Activated B cell treated with CpG ODN at 0.5 μM for 24 hours (primary cell): ENCODE measurements at regions of chr1 and their contacts with region 1.

Region 1: DNA sequence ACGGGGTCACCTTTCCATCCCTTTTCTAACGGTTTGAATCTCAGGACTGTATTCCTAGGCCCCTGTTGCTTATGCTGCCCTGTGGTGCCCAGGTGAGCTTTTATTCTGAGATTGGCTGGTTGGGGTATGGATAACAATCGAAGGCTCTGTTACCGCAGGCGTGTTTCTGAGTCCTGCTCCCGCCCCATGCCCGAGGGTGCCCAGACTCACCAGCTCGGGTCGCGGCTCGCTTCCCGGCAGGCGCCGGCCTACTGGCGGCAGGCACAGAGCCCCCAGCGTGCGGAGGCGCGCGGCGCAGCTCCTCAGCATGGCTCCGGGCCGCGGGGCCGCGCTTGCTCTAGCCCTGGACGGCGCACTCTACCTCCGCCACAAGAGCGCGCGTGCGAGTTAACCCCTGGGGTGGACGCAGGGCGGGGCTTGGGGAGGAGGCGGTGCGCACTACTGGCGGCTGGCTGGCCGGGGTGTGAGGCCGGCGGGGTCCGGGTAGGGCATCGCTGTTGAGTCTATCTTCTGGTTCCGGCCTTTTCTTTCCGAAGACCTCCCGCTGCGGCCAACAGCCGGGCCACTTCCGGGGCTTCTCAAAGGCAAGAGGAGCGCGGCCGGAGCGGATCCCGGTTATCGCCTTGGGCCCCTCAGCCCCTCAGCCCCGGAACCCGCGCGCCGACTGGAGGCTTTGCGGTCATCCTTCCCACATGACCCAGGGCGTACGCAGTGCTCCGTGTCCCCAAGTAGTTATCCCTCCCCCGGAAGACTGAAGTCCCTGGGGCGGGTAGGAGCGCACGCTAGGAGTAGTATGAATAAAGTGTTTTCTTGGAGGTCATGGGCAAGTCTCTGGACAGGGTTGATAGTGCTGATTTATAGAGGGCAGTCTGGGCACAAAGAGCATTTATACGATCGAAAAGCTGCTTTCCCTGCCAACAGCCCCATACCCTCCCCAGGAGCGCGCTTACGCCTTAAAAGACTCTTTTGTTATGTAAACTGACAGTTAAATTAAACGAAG is at the start of gene THEM4:
- DNase-seq: peak; percentile 93
- ATAC-seq: peak; percentile 99
- H3K4me3 Mint-ChIP-seq: peak within 1 kb of the TSS; percentile 90
- H3K27ac Mint-ChIP-seq: peak within 1 kb of the TSS; percentile 92
- H3K4me1 Mint-ChIP-seq: peaks cover 16% of the 10 kb centered on the region
- H3K27me3 Mint-ChIP-seq: no peaks in the 10 kb centered on the region
- CTCF ChIP-seq: no peak
- total RNA-seq, gene THEM4: 20.4 and 22.8 TPM in 2 replicates

Region 2: DNA sequence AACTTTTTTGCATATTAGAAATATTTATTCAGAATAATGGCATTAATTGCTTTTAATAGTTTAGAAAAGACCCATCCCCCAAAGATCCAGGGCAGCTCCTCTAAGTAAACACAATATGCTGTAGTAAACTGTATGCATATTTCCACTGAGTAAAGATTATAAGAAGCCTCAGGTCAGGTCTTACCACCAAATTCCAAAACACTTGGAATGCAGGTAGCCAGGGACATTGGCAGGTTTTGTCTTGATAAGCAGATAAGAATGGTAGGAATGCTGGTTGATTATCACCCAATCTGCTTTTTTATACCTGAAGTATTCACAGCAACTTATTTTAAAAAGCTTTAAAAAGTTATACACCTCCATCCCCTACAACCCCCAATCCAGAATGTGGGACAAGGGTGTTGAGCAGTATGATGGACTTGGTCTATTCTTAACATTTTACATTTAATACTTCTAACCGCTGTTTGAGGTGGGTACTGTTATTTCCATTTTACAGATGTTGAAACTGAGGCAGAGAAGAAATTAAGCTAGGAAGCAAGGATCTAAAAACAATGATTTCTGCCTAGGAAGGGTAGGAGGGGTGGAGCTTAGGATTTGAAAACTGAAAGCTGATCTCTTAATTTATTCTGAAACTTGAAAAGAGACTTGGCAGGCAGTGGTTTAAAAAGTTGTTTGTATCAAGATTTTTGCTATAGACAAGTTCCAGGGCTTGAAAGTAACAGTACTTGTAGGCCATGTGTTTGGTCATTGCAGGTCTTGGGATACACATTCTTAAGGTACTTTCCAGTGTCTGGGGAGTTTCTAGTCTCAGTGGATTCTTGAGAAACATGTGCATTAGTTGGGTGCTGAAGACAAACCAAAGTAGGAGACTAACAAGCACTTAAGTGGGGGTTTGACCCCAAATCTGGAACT is 15.5 kb after region 1 on chr1:
- CTCF ChIA-PET with region 1: interaction called, 7 read pairs
- POLR2A ChIA-PET with region 1: interaction called, 109 read pairs
- intact Hi-C with region 1: loop called (anchors 1 kb)
- DNase-seq: no peak
- ATAC-seq: no peak
- H3K4me3 Mint-ChIP-seq: no peak overlapping the region
- H3K27ac Mint-ChIP-seq: peak overlapping the region; percentile 8
- H3K4me1 Mint-ChIP-seq: peaks cover 36% of the 10 kb centered on the region
- H3K27me3 Mint-ChIP-seq: no peaks in the 10 kb centered on the region
- CTCF ChIP-seq: no peak

Region 3: GRCh38 chr1:151934048-151934493 is 24.6 kb after region 1 on chr1:
- CTCF ChIA-PET with region 1: interaction called, 12 read pairs
- POLR2A ChIA-PET with region 1: interaction called, 4 read pairs
- intact Hi-C with region 1: no loop called
- DNase-seq: no peak
- ATAC-seq: peak; percentile 90
- H3K4me3 Mint-ChIP-seq: no peak overlapping the region
- H3K27ac Mint-ChIP-seq: no peak overlapping the region
- H3K4me1 Mint-ChIP-seq: peaks cover 2% of the 10 kb centered on the region
- H3K27me3 Mint-ChIP-seq: peaks cover 11% of the 10 kb centered on the region
- CTCF ChIP-seq: peak; percentile 86

Region 4: GRCh38 chr1:151944126-151944869 is 34.8 kb after region 1 on chr1:
- CTCF ChIA-PET with region 1: no interaction called
- POLR2A ChIA-PET with region 1: interaction called, 5 read pairs
- intact Hi-C with region 1: loop called (anchors 5 kb)
- DNase-seq: no peak
- ATAC-seq: no peak
- H3K4me3 Mint-ChIP-seq: no peak overlapping the region
- H3K27ac Mint-ChIP-seq: no peak overlapping the region
- H3K4me1 Mint-ChIP-seq: peaks cover 40% of the 10 kb centered on the region
- H3K27me3 Mint-ChIP-seq: no peaks in the 10 kb centered on the region
- CTCF ChIP-seq: no peak